Body of pancreas (tissue), 4 donors: ENCODE measurements at regions of chr14 and their contacts with region 1.

Region 1: DNA sequence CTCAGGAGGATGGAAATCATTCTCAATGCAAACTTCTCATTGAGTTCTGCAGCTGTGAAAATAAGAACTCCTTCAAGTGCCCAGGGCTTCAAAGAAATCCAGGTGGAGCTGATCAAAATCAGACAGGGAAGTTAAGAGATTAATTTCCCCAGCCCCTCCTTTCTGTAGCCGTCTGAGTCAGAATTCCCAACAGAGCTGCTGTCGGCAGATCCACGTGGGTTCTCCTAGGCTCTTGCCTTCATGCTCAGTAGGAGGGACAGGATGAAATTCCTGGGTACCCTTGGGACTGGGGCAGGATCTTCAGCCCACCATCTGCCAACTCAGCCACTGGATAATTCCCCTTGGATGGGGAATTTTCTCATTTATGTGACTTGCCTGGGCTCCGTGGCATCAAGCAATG is 13.3 kb downstream of the TGFB3 start:
- DNase-seq: no peak
- ATAC-seq: peak; percentile 47
- H3K4me3 ChIP-seq: no peak overlapping the region
- H3K27ac ChIP-seq: no peak overlapping the region
- H3K4me1 ChIP-seq: peaks cover 9% of the 10 kb centered on the region
- H3K27me3 ChIP-seq: no peaks in the 10 kb centered on the region
- CTCF ChIP-seq: no peak
- POLR2A ChIP-seq: no peak

Region 2: DNA sequence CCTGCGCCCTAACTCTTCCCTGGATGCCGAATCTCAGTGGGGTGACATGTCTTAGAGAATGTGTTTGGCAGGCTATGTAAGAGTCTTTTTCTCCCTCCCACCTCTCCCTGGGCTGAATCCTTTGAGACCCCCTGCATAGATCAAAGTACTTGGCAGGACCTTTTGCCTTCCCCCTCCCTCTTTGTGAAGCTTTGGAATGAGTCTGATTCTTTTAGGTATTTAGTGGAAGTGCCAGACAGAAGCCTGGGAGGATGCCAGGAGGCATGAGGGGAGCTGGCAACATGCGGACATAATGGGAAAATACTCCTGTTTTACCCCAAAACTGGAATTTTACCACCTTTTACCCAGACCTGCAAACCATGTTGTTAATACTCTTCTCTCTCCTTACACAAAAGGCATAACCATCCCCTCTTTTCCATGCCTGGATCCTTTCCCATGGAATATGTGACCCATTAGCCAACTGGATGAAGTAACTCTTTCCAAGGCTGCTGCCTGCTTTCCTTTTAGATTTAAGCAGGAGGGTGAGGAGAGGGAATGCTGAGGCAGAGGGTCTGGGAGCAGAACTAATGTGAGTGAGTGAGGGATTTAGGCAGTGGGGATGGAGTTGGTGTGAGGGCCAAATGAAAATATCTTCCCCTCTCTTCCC is 265.7 kb before region 1 on chr14:
- intact Hi-C with region 1: loop called (anchors 5 kb)
- DNase-seq: peak; percentile 19 to 52 (median 24)
- ATAC-seq: peak; percentile 80
- H3K4me3 ChIP-seq: no peak overlapping the region
- H3K27ac ChIP-seq: peak overlapping the region in 3 of 4 donors; percentile 31 to 69 (median 64)
- H3K4me1 ChIP-seq: peaks cover 10% of the 10 kb centered on the region
- H3K27me3 ChIP-seq: no peaks in the 10 kb centered on the region
- CTCF ChIP-seq: no peak
- POLR2A ChIP-seq: no peak

Region 3: DNA sequence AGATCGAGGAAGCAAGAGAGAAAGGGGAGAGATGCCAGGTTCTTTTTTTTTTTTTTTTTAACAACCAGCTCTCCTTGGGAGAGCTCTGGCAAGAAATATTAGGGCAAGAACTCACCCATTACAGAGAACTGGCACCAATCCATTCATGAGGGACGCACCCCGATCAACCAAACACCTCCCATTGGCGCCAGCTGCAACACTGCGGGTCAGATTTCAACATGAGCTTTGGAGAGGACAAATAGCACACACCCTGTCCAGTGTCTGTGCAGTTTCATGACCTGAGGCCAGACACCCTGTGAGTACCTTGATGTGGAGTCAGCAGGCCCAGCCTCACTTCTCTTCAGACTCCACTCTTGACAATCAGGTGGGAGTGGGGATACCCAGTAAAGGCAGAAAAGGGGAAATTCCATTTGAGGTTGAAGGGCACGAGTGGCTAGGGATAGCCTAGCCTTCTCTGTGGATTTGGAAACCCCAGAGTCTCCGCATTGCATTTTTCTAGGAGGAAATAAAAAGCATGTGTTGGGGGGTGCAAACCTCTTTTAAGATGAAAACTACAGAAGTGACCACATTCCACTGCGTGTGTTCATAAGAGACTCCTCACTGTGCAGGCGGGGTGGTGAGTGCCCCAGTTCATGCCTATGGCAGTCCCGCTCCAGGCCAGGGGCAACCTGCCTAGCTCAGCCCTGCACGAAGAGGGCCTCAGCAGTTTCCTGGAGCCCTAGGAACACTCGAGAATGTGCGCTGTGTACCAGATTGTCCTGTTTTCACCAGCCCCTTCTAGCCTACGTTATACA is 140.8 kb after region 1 on chr14:
- intact Hi-C with region 1: no loop called
- DNase-seq: no peak
- ATAC-seq: no peak
- H3K4me3 ChIP-seq: no peak overlapping the region
- H3K27ac ChIP-seq: no peak overlapping the region
- H3K4me1 ChIP-seq: no peaks in the 10 kb centered on the region
- H3K27me3 ChIP-seq: no peaks in the 10 kb centered on the region
- CTCF ChIP-seq: no peak
- POLR2A ChIP-seq: no peak